CD4-positive, alpha-beta T cell (primary cell): ENCODE measurements at regions of chr2 and their contacts with region 1.

Region 1: GRCh38 chr2:239380831-239381708 is 19.8 kb downstream of the HDAC4 start:
- DNase-seq: peak; percentile 56 to 89 (median 70)
- ATAC-seq: peak; percentile 93
- H3K4me3 ChIP-seq: peak overlapping the region; percentile 51
- H3K4me3 Mint-ChIP-seq: peak overlapping the region; percentile 86
- H3K27ac ChIP-seq: peak overlapping the region; percentile 61 to 65
- H3K27ac Mint-ChIP-seq: peak overlapping the region; percentile 92
- H3K4me1 ChIP-seq: peaks cover 17% of the 10 kb centered on the region
- H3K4me1 Mint-ChIP-seq: peaks cover 23% of the 10 kb centered on the region
- H3K27me3 ChIP-seq: no peaks in the 10 kb centered on the region
- H3K27me3 Mint-ChIP-seq: no peaks in the 10 kb centered on the region
- CTCF ChIP-seq: no peak

Region 2: GRCh38 chr2:239143858-239144718 is 237.0 kb before region 1 on chr2:
- CTCF ChIA-PET with region 1: no interaction called
- POLR2A ChIA-PET with region 1: no interaction called
- intact Hi-C with region 1: no loop called
- DNase-seq: peak in 9 of 14 experiments; percentile 10 to 63 (median 26)
- ATAC-seq: peak; percentile 74
- H3K4me3 ChIP-seq: no peak overlapping the region
- H3K4me3 Mint-ChIP-seq: no peak overlapping the region
- H3K27ac ChIP-seq: no peak overlapping the region
- H3K27ac Mint-ChIP-seq: no peak overlapping the region
- H3K4me1 ChIP-seq: no peaks in the 10 kb centered on the region
- H3K4me1 Mint-ChIP-seq: peaks cover 7% of the 10 kb centered on the region
- H3K27me3 ChIP-seq: no peaks in the 10 kb centered on the region
- H3K27me3 Mint-ChIP-seq: no peaks in the 10 kb centered on the region
- CTCF ChIP-seq: peak; percentile 51

Region 3: GRCh38 chr2:239318790-239319661 is 62.0 kb before region 1 on chr2:
- CTCF ChIA-PET with region 1: no interaction called
- POLR2A ChIA-PET with region 1: interaction called, 11 read pairs
- intact Hi-C with region 1: no loop called
- DNase-seq: peak in 5 of 14 experiments; percentile 32 to 61 (median 57)
- ATAC-seq: no peak
- H3K4me3 ChIP-seq: peak overlapping the region; percentile 49
- H3K4me3 Mint-ChIP-seq: peak overlapping the region; percentile 90
- H3K27ac ChIP-seq: peak overlapping the region; percentile 37 to 61
- H3K27ac Mint-ChIP-seq: peak overlapping the region; percentile 97
- H3K4me1 ChIP-seq: peaks cover 69% of the 10 kb centered on the region
- H3K4me1 Mint-ChIP-seq: peaks cover 70% of the 10 kb centered on the region
- H3K27me3 ChIP-seq: no peaks in the 10 kb centered on the region
- H3K27me3 Mint-ChIP-seq: no peaks in the 10 kb centered on the region
- CTCF ChIP-seq: no peak

Region 4: DNA sequence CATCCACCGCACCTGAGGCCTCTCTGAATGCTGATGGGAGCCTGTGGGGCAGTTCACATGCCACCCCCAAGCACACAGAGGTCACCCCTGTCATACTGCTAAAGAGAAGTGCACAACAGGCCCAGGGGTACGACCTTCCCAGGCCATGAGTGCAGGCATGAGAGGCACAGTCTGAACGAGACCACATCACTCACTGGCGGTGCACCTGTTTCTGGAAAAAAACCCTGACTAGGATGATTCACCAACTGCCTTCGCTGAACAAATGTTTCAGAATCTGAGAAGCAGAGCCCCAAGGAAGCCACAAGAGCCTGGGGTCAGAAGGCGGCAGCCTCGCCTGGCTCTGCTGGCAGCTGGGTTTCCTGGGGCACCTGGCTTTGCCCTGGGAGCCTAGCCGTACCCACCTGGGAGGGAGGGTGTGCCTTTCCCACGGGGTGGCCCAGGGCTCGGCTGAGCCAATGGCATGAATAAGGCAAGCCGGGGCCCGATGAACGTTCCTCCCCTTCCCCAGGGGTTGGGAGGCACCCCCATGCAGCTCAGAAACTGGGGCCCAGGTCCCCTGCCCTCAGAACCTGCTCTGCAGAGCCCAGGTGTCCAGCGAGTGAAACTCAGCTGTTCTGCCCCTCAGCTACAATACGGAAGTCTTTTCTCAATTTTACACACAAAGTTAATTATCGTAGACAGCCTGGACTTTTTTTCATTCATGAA is 54.1 kb before region 1 on chr2:
- CTCF ChIA-PET with region 1: no interaction called
- POLR2A ChIA-PET with region 1: interaction called, 11 read pairs
- intact Hi-C with region 1: loop called in 1 of 2 experiments (anchors 1 kb)
- DNase-seq: peak; percentile 46 to 89 (median 74)
- ATAC-seq: peak; percentile 77
- H3K4me3 ChIP-seq: no peak overlapping the region
- H3K4me3 Mint-ChIP-seq: peak overlapping the region; percentile 75
- H3K27ac ChIP-seq: peak overlapping the region; percentile 71 to 73
- H3K27ac Mint-ChIP-seq: peak overlapping the region; percentile 93
- H3K4me1 ChIP-seq: peaks cover 78% of the 10 kb centered on the region
- H3K4me1 Mint-ChIP-seq: peaks cover 85% of the 10 kb centered on the region
- H3K27me3 ChIP-seq: no peaks in the 10 kb centered on the region
- H3K27me3 Mint-ChIP-seq: no peaks in the 10 kb centered on the region
- CTCF ChIP-seq: no peak

Region 5: GRCh38 chr2:239363946-239364630 is 17.0 kb before region 1 on chr2:
- CTCF ChIA-PET with region 1: interaction called, 12 read pairs
- POLR2A ChIA-PET with region 1: interaction called, 40 read pairs
- intact Hi-C with region 1: loop called in 1 of 2 experiments (anchors 1 kb)
- DNase-seq: peak in 9 of 14 experiments; percentile 14 to 82 (median 39)
- ATAC-seq: peak; percentile 90
- H3K4me3 ChIP-seq: no peak overlapping the region
- H3K4me3 Mint-ChIP-seq: no peak overlapping the region
- H3K27ac ChIP-seq: no peak overlapping the region
- H3K27ac Mint-ChIP-seq: peak overlapping the region; percentile 42
- H3K4me1 ChIP-seq: peaks cover 15% of the 10 kb centered on the region
- H3K4me1 Mint-ChIP-seq: peaks cover 37% of the 10 kb centered on the region
- H3K27me3 ChIP-seq: no peaks in the 10 kb centered on the region
- H3K27me3 Mint-ChIP-seq: no peaks in the 10 kb centered on the region
- CTCF ChIP-seq: no peak